Mammary epithelial cell (primary cell): ENCODE measurements at regions of chr6 and their contacts with region 1.

Region 1: DNA sequence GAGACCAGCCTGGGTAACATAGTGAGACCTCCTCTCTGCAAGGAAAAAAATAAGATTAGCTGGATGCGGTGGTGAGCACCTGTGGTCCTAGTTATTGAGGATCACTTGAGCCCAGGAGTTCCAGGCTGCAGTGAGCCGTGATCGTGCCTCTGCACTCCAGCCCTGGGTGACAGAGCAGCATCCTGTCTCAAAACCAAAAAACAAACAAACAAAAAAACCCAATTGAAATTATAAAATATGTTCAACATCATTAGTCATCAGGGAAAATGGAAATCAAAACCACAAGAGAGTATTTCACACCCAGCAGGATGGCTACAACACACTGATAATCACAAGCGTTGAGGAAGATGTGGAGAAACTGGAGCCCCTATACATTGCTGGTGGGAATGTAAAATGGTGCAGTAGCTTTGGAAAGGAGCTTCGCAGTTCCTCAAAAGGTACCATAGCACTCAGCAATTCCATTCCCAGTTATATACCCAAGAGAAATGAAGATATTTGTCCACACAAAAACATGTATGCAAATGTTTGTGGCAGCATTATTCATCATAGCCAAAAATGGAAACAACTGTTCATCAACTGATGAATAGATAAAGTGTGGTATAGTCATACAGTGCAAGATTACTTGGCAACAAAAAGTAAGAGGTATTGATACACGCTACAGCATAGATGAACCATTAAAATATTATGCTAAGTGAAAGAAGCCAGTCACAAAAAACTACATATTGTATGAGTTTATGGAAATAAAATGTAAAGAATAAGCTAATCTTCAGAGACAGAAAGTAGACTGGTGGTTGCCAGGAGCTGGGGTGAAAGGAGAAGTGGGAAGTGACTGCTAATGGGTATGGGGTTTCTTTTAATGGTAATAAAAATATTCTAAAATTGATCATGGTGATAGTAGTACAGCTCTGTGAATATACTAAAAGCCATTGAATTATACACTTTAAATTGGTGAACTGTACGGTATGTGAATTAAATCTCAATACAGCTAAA is 38.7 kb upstream of the RIPOR2 start:
- DNase-seq: peak; percentile 25
- H3K4me3 ChIP-seq: no peak overlapping the region
- H3K27ac ChIP-seq: no peak overlapping the region
- H3K4me1 ChIP-seq: no peaks in the 10 kb centered on the region
- H3K27me3 ChIP-seq: no peaks in the 10 kb centered on the region
- CTCF ChIP-seq: no peak

Region 2: GRCh38 chr6:24933868-24934401 is 40.5 kb before region 1 on chr6:
- CTCF ChIA-PET with region 1: no interaction called
- dilution Hi-C with region 1: no loop called
- in situ Hi-C with region 1: no loop called
- intact Hi-C with region 1: loop called (anchors 5 kb)
- DNase-seq: no peak
- H3K4me3 ChIP-seq: no peak overlapping the region
- H3K27ac ChIP-seq: no peak overlapping the region
- H3K4me1 ChIP-seq: no peaks in the 10 kb centered on the region
- H3K27me3 ChIP-seq: no peaks in the 10 kb centered on the region
- CTCF ChIP-seq: peak; percentile 25 to 49